ENCODE measurements at regions of chr12 and their contacts with region 1.

Region 1: DNA sequence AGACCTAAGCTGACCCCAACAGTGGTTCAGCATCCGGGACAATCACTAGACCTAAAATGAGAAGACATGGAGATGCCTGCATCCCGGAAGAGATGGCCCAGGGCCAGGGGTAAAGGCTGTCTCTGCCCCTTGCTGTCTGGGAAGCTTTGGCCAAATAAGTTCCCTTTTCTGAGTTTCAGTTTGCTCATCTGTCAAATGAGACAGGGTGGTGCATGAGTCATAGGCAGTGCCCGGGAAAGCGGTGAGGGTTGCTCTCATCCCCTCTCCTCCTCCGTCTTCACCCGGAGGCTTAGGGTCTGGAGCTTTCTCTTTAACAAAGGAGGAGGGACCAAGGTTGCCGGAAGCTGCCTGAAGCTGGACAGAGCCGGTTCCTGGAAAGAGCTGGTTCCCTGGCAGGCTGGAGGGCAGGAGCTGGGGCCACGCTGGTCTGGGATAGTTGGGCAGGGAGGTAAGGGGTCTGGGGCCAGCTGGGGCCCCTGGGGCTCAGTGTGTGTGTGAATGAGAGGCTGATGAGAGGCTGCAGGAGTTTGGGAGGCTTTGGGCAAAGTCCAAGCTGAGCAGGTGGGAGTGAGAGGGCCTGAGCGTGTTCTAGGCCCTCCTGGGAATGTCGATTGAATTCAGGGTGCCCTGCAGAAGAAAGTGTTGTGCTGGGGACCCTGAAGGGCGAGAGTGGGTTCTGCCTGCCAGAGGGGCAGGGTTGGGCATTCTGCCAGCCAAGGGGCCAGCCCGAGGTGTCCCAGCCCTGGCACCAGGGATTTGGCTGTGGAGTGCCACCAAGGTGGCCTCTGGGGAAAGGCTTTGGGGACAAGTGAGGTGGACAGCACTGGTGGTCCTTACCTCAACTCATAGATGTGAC is at the start of gene SDSL:
- DNase-seq: peak; percentile 56
- CTCF ChIP-seq: no peak

Region 2: GRCh38 chr12:113184900-113185773 is 237.1 kb before region 1 on chr12 and contains the starts of genes DDX54 and RITA1:
- in situ Hi-C with region 1: loop called (anchors 25 kb)
- DNase-seq: peak; percentile 93
- CTCF ChIP-seq: no peak

Region 3: GRCh38 chr12:113912760-113913329 is 490.6 kb after region 1 on chr12:
- in situ Hi-C with region 1: loop called (anchors 25 kb)
- DNase-seq: peak; percentile 74
- CTCF ChIP-seq: peak; percentile 90